ENCODE measurements at regions of chr9 and their contacts with region 1.

Region 1: GRCh38 chr9:118563677-118564076 is 805.6 kb downstream of the BRINP1 start:
- DNase-seq: no peak
- ATAC-seq: no peak
- H3K4me3 ChIP-seq: no peak overlapping the region
- H3K27ac ChIP-seq: no peak overlapping the region
- H3K4me1 ChIP-seq: no peaks in the 10 kb centered on the region
- H3K27me3 ChIP-seq: no peaks in the 10 kb centered on the region
- CTCF ChIP-seq: no peak

Region 2: GRCh38 chr9:118595719-118596305 is 32.1 kb after region 1 on chr9:
- intact Hi-C with region 1: loop called in 1 of 10 experiments (anchors 1 kb)
- DNase-seq: peak in 1 of 2 donors; percentile 5
- ATAC-seq: peak in 1 of 8 donors; percentile 73
- H3K4me3 ChIP-seq: no peak overlapping the region
- H3K27ac ChIP-seq: no peak overlapping the region
- H3K4me1 ChIP-seq: no peaks in the 10 kb centered on the region
- H3K27me3 ChIP-seq: peaks cover 0 to 4% (median 0%) of the 10 kb centered on the region in 7 donors
- CTCF ChIP-seq: peak in 7 of 9 donors; percentile 17 to 51 (median 38)